Activated T-helper 2 cell treated with anti-CD3 and anti-CD28 coated beads, Interferon-gamma antibody, Interleukin-2, Interleukin-4, amounts not matched to agents 10 μg/mL and 5 μg/mL and 100 μg/mL, durations not matched to agents 14 hours and 24 hours and 36 hours (primary cell): ENCODE measurements at regions of chr2 and their contacts with region 1.

Region 1: DNA sequence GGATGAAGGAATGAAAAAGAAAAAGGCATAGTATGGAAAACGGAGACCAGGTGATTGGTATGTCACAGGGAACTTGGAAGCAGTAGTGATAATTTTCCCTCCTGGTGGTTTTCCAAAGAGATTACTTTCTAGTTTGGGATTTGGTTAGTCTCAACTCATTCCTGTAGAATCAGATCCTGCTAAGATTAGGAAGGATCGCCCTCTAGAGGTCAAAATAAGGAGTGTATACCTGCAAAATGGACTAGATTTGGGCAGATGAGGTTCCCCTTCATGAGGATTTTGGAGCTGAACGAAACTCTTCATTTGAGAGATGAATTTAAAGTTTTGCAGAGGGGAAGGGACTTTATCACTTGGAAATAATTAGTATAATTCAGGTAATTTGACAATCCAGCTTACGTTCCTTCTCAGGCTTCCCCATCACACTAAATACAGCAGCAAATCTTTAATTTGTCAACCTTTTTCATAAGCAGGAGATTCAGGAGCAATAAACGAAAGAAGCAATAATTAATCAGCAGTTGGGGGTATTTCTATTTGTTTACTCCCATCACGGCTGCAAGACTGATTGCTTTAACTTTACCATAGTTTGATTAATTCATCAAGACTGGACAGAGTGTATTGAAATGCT is 65.2 kb downstream of the CCDC195 start:
- DNase-seq: no peak
- H3K4me3 Mint-ChIP-seq: no peak overlapping the region
- H3K27ac Mint-ChIP-seq: no peak overlapping the region
- H3K4me1 Mint-ChIP-seq: peaks cover 4% of the 10 kb centered on the region
- H3K27me3 Mint-ChIP-seq: no peaks in the 10 kb centered on the region

Region 2: GRCh38 chr2:223952280-223952968 is 698.5 kb before region 1 on chr2:
- intact Hi-C with region 1: no loop called
- DNase-seq: no peak
- H3K4me3 Mint-ChIP-seq: no peak overlapping the region
- H3K27ac Mint-ChIP-seq: no peak overlapping the region
- H3K4me1 Mint-ChIP-seq: peaks cover 62% of the 10 kb centered on the region
- H3K27me3 Mint-ChIP-seq: no peaks in the 10 kb centered on the region

Region 3: GRCh38 chr2:224442071-224442967 is 208.6 kb before region 1 on chr2:
- intact Hi-C with region 1: loop called (anchors 5 kb)
- DNase-seq: no peak
- H3K4me3 Mint-ChIP-seq: peak overlapping the region; percentile 78
- H3K27ac Mint-ChIP-seq: no peak overlapping the region
- H3K4me1 Mint-ChIP-seq: peaks cover 10% of the 10 kb centered on the region
- H3K27me3 Mint-ChIP-seq: peaks cover 46% of the 10 kb centered on the region

Region 4: DNA sequence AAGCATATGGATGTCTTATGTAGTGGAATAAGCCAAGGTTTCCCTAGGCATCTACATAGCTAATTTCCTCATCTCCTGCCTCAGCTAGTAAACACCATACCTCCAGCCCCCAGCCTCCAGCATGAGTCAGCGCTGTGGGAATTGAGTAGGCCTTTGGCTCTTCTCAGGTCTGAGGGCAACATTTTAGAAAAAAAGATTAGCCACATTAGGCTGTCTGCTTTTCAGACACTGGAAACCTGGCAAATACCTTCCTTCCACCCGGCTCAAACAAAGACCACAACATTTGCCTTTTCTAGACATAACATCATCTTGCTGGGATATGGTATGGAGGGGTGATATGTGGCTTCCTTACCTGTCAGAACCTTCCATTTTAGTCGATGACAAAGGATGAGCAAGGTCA is 71.3 kb after region 1 on chr2:
- intact Hi-C with region 1: no loop called
- DNase-seq: no peak
- H3K4me3 Mint-ChIP-seq: no peak overlapping the region
- H3K27ac Mint-ChIP-seq: no peak overlapping the region
- H3K4me1 Mint-ChIP-seq: no peaks in the 10 kb centered on the region
- H3K27me3 Mint-ChIP-seq: no peaks in the 10 kb centered on the region